ENCODE measurements at regions of chr10 and their contacts with region 1.

Region 1: DNA sequence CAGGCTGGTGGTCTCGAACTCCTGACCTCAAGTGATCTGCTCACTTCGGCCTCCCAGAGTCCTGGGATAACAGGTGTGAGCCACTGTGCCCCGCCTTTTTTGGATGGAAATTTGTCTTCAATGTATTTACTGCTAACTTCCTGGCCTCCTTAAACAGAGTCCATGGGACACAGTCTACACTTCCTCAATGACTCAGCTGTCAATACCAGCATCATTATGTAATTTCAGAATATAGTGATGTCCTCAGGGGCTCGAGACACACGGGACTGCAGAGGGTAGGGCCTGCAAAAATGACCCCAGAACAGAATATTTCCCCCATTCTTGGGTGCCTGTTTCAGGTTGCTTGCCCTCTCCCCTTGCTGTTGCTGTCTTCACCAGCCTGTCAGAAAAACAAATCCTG is 31.1 kb downstream of the CAMK2G start:
- DNase-seq: no peak
- ATAC-seq: no peak
- H3K4me3 ChIP-seq: no peak overlapping the region
- H3K27ac ChIP-seq: no peak overlapping the region
- H3K4me1 ChIP-seq: peaks cover 0 to 10% of the 10 kb centered on the region in 2 experiments; a peak in 1 of 5 replicates
- H3K27me3 ChIP-seq: no peaks in the 10 kb centered on the region
- CTCF ChIP-seq: no peak
- EP300 ChIP-seq: no peak
- POLR2A ChIP-seq: no peak
- RAD21 ChIP-seq: no peak

Region 2: GRCh38 chr10:73940634-73941221 is 97.5 kb after region 1 on chr10:
- CTCF ChIA-PET with region 1: interaction called, 17 read pairs
- POLR2A ChIA-PET with region 1: interaction called, 3 read pairs
- in situ Hi-C with region 1: loop called (anchors 5 kb)
- intact Hi-C with region 1: no loop called
- DNase-seq: peak; percentile 93 to 97 (median 96)
- ATAC-seq: peak; percentile 99
- H3K4me3 ChIP-seq: peak overlapping the region; percentile 2; the same call in 1 of the 2 replicates
- H3K27ac ChIP-seq: peak overlapping the region; percentile 51
- H3K4me1 ChIP-seq: peaks cover 18% of the 10 kb centered on the region in 2 experiments; a peak in 4 of 5 replicates
- H3K27me3 ChIP-seq: no peaks in the 10 kb centered on the region
- CTCF ChIP-seq: peak; percentile 96 to 99 (median 97)
- EP300 ChIP-seq: 0 out of 2 replicates have a peak, but pooled peaks have one; percentile 12
- POLR2A ChIP-seq: peak; percentile 41; the same call in 1 of the 2 replicates
- RAD21 ChIP-seq: peak; percentile 99 to 100

Region 3: DNA sequence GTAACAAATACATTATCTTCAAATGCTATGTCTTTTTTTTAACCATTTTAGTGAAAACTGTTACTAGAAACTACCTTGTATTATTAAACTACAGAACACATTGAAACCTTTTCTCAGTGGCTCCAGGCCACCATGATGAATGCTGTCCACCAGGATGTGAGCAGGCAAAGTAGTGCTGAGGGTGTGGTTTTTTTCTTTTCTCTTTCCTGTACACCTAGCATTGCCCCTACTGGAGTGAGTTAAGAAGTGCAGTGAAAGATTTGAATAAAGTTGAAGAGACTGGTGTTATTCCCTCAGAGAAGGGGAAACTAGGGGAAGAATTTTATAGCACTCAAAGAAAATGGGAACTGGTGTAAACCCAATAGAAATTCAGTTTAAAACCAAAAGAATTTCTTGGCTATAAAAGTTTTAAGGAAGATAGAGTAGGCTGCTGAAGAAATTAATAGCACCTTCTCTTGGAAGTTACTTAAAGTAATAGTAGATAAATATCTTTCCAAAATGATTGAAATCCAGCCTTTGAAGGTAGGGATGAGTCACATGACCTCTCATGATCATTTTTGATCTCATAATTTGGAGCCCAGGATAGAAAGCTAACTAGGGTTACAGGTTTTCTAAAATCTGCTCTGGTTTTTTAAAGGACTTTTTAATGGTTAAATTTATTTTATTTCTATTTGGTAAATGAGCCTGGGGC is 1148.3 kb after region 1 on chr10:
- CTCF ChIA-PET with region 1: no interaction called
- POLR2A ChIA-PET with region 1: no interaction called
- in situ Hi-C with region 1: no loop called
- intact Hi-C with region 1: no loop called
- DNase-seq: peak; percentile 45 to 68 (median 60)
- ATAC-seq: peak; percentile 99
- H3K4me3 ChIP-seq: no peak overlapping the region
- H3K27ac ChIP-seq: no peak overlapping the region
- H3K4me1 ChIP-seq: no peaks in the 10 kb centered on the region
- H3K27me3 ChIP-seq: no peaks in the 10 kb centered on the region
- CTCF ChIP-seq: peak; percentile 55 to 63 (median 61)
- EP300 ChIP-seq: no peak
- POLR2A ChIP-seq: no peak
- RAD21 ChIP-seq: peak; percentile 32 to 51